ENCODE measurements at regions of chr3 and their contacts with region 1.

Region 1: GRCh38 chr3:113590983-113591382 is 58.6 kb downstream of the SIDT1 start:
- DNase-seq: peak in 7 of 9 donors; percentile 23 to 58 (median 36)
- ATAC-seq: peak; percentile 65
- H3K4me3 ChIP-seq: no peak overlapping the region
- H3K4me3 Mint-ChIP-seq: peak overlapping the region in 7 of 10 donors; percentile 12 to 64 (median 40)
- H3K27ac ChIP-seq: no peak overlapping the region
- H3K27ac Mint-ChIP-seq: peak overlapping the region in 6 of 9 donors; percentile 19 to 79 (median 63)
- H3K4me1 ChIP-seq: no peaks in the 10 kb centered on the region
- H3K4me1 Mint-ChIP-seq: peaks cover 6 to 43% (median 26%) of the 10 kb centered on the region in 7 donors
- H3K27me3 ChIP-seq: no peaks in the 10 kb centered on the region
- H3K27me3 Mint-ChIP-seq: no peaks in the 10 kb centered on the region

Region 2: DNA sequence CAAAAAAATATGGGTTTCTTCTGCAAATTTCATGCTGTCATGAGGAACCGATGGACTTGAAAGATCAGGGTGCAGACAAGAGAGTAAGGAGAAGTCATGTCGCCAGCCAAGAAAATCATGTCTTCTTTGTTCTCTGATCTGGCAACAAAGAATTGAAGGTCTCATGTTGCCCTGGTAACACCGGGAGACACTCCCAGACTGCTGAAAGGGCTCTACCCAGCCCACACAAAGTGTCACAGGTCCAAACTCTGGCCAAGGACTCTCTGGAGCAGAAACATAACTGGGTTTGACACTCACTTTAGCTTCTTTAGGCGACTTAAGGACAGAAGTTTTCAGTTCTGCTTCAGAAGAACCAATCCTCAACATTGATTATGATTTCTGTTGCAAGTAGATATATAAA is 15.8 kb before region 1 on chr3:
- CTCF ChIA-PET with region 1: interaction called, 11 read pairs
- POLR2A ChIA-PET with region 1: interaction called, 4 read pairs
- intact Hi-C with region 1: no loop called
- DNase-seq: no peak
- ATAC-seq: no peak
- H3K4me3 ChIP-seq: no peak overlapping the region
- H3K4me3 Mint-ChIP-seq: no peak overlapping the region
- H3K27ac ChIP-seq: no peak overlapping the region
- H3K27ac Mint-ChIP-seq: peak overlapping the region in 8 of 9 donors; percentile 10 to 79 (median 66)
- H3K4me1 ChIP-seq: no peaks in the 10 kb centered on the region
- H3K4me1 Mint-ChIP-seq: peaks cover 3 to 21% (median 13%) of the 10 kb centered on the region in 7 donors
- H3K27me3 ChIP-seq: no peaks in the 10 kb centered on the region
- H3K27me3 Mint-ChIP-seq: no peaks in the 10 kb centered on the region

Region 3: DNA sequence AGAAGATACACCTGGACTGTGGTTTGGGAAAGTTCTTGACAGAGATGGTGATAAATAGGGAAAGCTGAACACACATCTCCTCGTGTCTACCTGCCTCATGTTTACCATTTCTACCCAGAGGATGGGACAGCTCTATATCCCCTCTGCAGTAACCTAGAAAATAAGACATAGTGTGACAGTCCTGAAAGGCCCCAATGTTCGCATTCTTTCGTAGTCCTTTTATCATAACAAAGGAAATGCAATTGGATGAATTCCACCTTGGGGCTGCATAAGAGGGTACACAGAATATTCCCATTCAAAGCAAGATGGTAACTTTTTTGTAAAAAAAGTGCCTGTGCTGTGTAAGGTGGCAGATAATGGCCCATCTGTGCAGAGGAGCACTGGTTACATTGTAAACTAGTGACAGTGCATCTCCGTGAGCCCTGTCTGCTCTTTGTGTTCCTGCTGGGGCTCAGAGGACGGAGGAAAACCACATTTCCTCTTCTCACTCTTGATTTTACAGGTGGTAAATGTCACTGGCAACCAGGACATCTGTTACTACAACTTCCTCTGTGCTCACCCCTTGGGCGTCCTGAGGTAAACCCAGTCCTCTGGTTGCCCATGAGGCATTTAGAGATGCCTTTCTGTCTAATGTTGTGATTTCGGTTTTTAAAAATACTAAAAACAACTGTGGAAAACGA is 15.7 kb after region 1 on chr3:
- CTCF ChIA-PET with region 1: no interaction called
- POLR2A ChIA-PET with region 1: interaction called, 3 read pairs
- intact Hi-C with region 1: loop called in 1 of 2 experiments (anchors 1 kb)
- DNase-seq: peak in 7 of 9 donors; percentile 32 to 64 (median 58)
- ATAC-seq: peak; percentile 87
- H3K4me3 ChIP-seq: no peak overlapping the region
- H3K4me3 Mint-ChIP-seq: peak overlapping the region; percentile 8 to 77 (median 56)
- H3K27ac ChIP-seq: peak overlapping the region; percentile 0
- H3K27ac Mint-ChIP-seq: peak overlapping the region in 7 of 9 donors; percentile 60 to 83 (median 77)
- H3K4me1 ChIP-seq: peaks cover 12 to 17% of the 10 kb centered on the region in 2 donors
- H3K4me1 Mint-ChIP-seq: peaks cover 21 to 38% (median 34%) of the 10 kb centered on the region in 7 donors
- H3K27me3 ChIP-seq: no peaks in the 10 kb centered on the region
- H3K27me3 Mint-ChIP-seq: no peaks in the 10 kb centered on the region

Region 4: DNA sequence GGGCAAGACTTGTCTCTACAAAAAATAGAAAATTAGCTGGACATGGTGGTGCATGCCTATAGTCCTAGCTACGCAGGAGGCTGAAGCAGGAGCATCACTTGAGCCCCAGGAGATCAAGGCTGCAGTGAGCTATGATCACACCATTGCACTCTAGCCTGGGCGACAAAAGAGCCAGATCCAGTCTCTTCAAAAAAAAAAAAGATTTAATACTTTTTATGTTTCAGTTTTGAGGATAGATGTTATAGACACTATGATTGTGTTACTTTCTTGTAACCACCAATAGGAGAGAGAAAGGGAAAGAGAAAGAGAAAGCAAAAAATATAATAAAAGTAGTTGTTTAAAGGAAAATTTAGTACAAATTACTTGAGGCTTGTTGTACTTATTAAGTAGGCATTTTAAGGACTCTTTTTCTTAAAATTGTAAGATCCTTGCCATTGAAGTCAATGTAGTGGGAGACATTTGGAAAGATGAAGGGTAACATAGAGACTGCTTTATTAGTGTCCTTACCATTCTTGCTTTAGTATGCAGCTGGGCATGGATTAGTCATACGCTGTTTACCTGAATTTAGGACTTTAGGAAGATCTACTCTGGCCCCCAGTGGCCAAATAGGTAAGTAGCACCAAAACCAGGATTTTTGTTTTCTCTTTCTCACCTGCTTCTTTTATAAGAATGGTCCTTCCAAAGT is 321.7 kb after region 1 on chr3:
- CTCF ChIA-PET with region 1: no interaction called
- POLR2A ChIA-PET with region 1: no interaction called
- intact Hi-C with region 1: no loop called
- DNase-seq: peak in 7 of 9 donors; percentile 18 to 50 (median 36)
- ATAC-seq: peak; percentile 91
- H3K4me3 ChIP-seq: no peak overlapping the region
- H3K4me3 Mint-ChIP-seq: peak overlapping the region in 8 of 10 donors; percentile 29 to 75 (median 64)
- H3K27ac ChIP-seq: no peak overlapping the region
- H3K27ac Mint-ChIP-seq: peak overlapping the region in 6 of 9 donors; percentile 5 to 76 (median 58)
- H3K4me1 ChIP-seq: no peaks in the 10 kb centered on the region
- H3K4me1 Mint-ChIP-seq: peaks cover 0 to 7% (median 5%) of the 10 kb centered on the region in 7 donors
- H3K27me3 ChIP-seq: no peaks in the 10 kb centered on the region
- H3K27me3 Mint-ChIP-seq: peaks cover 0 to 15% (median 0%) of the 10 kb centered on the region in 5 donors